ENCODE measurements at regions of chr22 and their contacts with region 1.

Region 1: GRCh38 chr22:28855355-28856094 is 27.8 kb upstream of the ZNRF3 start:
- DNase-seq: peak in 1 of 2 donors; percentile 17
- ATAC-seq: peak; percentile 80

Region 2: GRCh38 chr22:29031227-29032011 is 175.9 kb after region 1 on chr22:
- intact Hi-C with region 1: loop called in 1 of 2 experiments (anchors 10 kb)
- DNase-seq: peak; percentile 34 to 65
- ATAC-seq: peak; percentile 34

Region 3: GRCh38 chr22:29040385-29041275 is 185.1 kb after region 1 on chr22:
- intact Hi-C with region 1: loop called (anchors 2 to 10 kb)
- DNase-seq: peak; percentile 47 to 71
- ATAC-seq: peak; percentile 61

Region 4: GRCh38 chr22:29245637-29246385 is 390.3 kb after region 1 on chr22:
- intact Hi-C with region 1: loop called in 1 of 2 experiments (anchors 10 kb)
- DNase-seq: peak in 1 of 2 donors; percentile 67
- ATAC-seq: peak; percentile 92

Measured in left colon (tissue), 2 donors.